ENCODE measurements at regions of chr11 and their contacts with region 1.

Region 1: GRCh38 chr11:131910523-131911387 is 540.3 kb downstream of the NTM start:
- DNase-seq: peak; percentile 56
- H3K4me3 ChIP-seq: peak overlapping the region; percentile 62
- H3K27ac ChIP-seq: peak overlapping the region; percentile 91
- H3K4me1 ChIP-seq: peaks cover 71% of the 10 kb centered on the region
- H3K27me3 ChIP-seq: no peaks in the 10 kb centered on the region
- CTCF ChIP-seq: no peak

Region 2: GRCh38 chr11:131838016-131838415 is 72.7 kb before region 1 on chr11:
- CTCF ChIA-PET with region 1: no interaction called
- POLR2A ChIA-PET with region 1: no interaction called
- intact Hi-C with region 1: no loop called
- DNase-seq: no peak
- H3K4me3 ChIP-seq: no peak overlapping the region
- H3K27ac ChIP-seq: no peak overlapping the region
- H3K4me1 ChIP-seq: no peaks in the 10 kb centered on the region
- H3K27me3 ChIP-seq: peaks cover 29% of the 10 kb centered on the region
- CTCF ChIP-seq: no peak

Region 3: DNA sequence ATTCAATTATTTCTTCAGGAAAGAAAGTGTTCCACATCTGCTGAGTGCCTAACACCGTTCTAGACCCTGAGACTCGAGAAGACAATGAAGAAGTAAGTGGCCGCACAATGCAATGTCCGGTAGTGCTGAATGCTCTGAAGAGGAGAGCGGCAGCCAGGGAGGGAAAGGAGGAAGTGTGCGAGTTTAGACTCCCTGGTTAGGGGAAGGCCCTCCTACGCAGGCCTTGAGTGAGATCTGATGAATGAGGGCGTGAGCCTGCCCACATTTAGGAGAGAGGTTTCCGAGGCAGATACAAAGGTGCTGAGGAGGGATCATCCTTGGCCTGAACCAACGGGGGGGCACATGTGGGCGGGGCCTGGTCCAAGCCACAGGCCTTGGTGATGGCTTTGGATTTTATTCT is 18.2 kb after region 1 on chr11:
- CTCF ChIA-PET with region 1: no interaction called
- POLR2A ChIA-PET with region 1: no interaction called
- intact Hi-C with region 1: no loop called
- DNase-seq: no peak
- H3K4me3 ChIP-seq: no peak overlapping the region
- H3K27ac ChIP-seq: no peak overlapping the region
- H3K4me1 ChIP-seq: peaks cover 8% of the 10 kb centered on the region
- H3K27me3 ChIP-seq: peaks cover 1% of the 10 kb centered on the region
- CTCF ChIP-seq: no peak

Region 4: DNA sequence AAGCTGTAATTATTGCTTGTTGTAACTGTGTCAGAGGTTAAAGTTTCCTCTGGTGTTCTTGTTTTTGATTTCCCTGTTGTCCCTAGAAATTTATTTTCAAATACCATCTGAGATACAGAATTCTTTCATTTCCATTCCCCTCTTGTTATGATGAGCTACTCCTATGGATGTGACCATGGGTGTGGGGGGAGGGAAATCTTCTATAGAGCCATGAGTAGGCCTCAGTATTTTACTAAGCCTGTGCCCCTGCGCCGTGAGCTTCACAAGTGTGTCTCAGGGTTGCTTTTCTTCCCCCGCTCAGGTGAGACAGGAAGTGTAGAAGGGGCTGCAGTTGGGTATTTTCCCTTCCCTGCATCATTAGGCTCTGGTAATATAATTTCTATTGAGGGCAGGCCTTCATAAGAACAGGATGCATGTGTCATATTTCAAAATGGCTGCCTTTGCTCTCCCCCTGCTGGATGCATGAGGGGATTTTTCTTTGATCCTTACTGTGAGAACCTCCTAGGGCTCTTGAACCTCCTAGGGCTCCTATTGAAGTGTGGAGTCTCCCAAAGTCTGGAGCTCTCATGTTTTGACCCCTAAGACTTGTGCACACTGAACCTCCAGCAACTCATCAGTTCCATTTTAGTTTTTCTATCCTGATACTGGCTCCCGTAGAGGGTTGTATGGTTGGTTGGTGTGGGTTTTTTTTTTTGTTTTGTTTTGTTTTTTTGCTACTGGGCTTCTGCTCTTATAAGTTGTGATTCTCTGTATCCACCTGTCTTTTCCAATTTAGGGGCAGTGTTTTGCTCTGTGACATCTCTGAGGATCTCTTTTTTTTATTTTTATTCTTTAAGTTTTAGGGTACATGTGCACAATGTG is 117.9 kb after region 1 on chr11:
- CTCF ChIA-PET with region 1: interaction called, 3 read pairs
- POLR2A ChIA-PET with region 1: no interaction called
- intact Hi-C with region 1: loop called (anchors 1 kb)
- DNase-seq: peak; percentile 90
- H3K4me3 ChIP-seq: no peak overlapping the region
- H3K27ac ChIP-seq: peak overlapping the region; percentile 60
- H3K4me1 ChIP-seq: peaks cover 54% of the 10 kb centered on the region
- H3K27me3 ChIP-seq: no peaks in the 10 kb centered on the region
- CTCF ChIP-seq: peak; percentile 78

Region 5: GRCh38 chr11:132126973-132127899 is 216.5 kb after region 1 on chr11:
- CTCF ChIA-PET with region 1: no interaction called
- POLR2A ChIA-PET with region 1: no interaction called
- intact Hi-C with region 1: loop called (anchors 2 kb)
- DNase-seq: peak; percentile 90
- H3K4me3 ChIP-seq: no peak overlapping the region
- H3K27ac ChIP-seq: peak overlapping the region; percentile 72
- H3K4me1 ChIP-seq: peaks cover 21% of the 10 kb centered on the region
- H3K27me3 ChIP-seq: no peaks in the 10 kb centered on the region
- CTCF ChIP-seq: peak; percentile 78

Region 6: GRCh38 chr11:133864756-133865155 is 1954.0 kb after region 1 on chr11:
- CTCF ChIA-PET with region 1: no interaction called
- POLR2A ChIA-PET with region 1: no interaction called
- intact Hi-C with region 1: no loop called
- DNase-seq: no peak
- H3K4me3 ChIP-seq: no peak overlapping the region
- H3K27ac ChIP-seq: no peak overlapping the region
- H3K4me1 ChIP-seq: no peaks in the 10 kb centered on the region
- H3K27me3 ChIP-seq: peaks cover 6% of the 10 kb centered on the region
- CTCF ChIP-seq: no peak

Measured in A673 (cell line).